PC-9 (cell line): ENCODE measurements at regions of chr9 and their contacts with region 1.

Region 1: DNA sequence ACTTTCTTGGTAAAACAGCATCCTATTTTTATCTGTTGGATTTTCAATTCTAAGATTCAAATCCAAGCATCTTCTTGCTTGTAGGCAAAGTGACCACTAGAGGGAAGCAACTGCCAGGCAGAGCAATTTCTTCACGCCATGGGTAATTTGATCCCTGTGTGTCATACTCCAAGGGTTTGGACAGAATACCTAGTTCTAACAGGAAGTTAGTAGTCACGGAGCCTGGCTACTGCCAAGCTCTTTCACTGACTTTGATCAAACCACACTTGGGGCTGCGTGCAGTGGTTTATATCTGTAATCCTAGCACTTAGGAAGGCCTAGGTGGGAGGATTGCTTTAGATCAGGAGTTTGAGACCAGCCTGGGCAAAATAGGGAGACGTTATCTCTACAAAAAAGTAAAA is 473.6 kb upstream of the TNC start:
- DNase-seq: peak; percentile 73 to 91
- H3K4me3 ChIP-seq: no peak overlapping the region
- H3K27ac ChIP-seq: peak overlapping the region; percentile 77
- H3K4me1 ChIP-seq: peaks cover 14% of the 10 kb centered on the region; the same call in 1 of the 2 replicates
- H3K27me3 ChIP-seq: no peaks in the 10 kb centered on the region
- CTCF ChIP-seq: peak; percentile 89

Region 2: DNA sequence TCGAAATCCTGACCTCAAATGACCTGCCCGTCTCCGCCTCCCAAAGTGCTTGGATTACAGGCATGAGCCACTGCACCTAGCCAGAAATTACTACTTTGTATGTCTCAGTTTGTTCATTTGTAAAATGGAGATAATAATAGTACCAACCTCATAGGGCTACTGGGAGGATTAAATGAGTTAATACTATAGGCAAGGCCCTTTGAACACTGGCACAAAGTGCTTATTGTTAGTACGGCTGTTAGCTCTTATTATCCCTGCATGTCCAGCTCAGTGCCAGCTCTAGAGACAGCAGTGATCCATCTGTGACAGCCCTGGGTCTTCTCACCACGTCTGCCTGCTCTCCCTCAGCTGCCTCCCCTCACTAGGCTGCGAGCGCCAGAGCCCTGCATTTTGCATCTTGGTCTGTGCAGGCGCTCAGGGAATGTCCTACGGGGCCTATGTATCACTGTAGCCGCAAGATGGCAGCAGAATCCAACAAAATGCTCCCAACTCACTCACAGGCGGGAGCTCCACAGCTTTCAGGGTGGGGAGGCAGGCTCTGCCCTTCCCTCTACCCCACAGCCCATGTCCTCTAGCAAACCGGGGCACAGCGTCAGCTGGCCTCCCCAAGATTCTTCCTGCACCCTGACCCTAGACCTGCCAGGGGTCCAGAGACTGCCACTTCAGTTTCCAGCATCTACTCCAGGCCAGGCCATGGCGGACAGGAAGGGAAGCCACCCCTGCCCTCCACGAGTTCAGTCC is 1186.1 kb before region 1 on chr9:
- CTCF ChIA-PET with region 1: no interaction called
- POLR2A ChIA-PET with region 1: no interaction called
- intact Hi-C with region 1: loop called (anchors 1 kb)
- DNase-seq: peak; percentile 59 to 76
- H3K4me3 ChIP-seq: no peak overlapping the region
- H3K27ac ChIP-seq: no peak overlapping the region
- H3K4me1 ChIP-seq: no peaks in the 10 kb centered on the region
- H3K27me3 ChIP-seq: no peaks in the 10 kb centered on the region
- CTCF ChIP-seq: peak; percentile 82

Region 3: GRCh38 chr9:114880291-114880751 is 711.3 kb before region 1 on chr9:
- CTCF ChIA-PET with region 1: no interaction called
- POLR2A ChIA-PET with region 1: no interaction called
- intact Hi-C with region 1: no loop called
- DNase-seq: no peak
- H3K4me3 ChIP-seq: no peak overlapping the region
- H3K27ac ChIP-seq: no peak overlapping the region
- H3K4me1 ChIP-seq: no peaks in the 10 kb centered on the region
- H3K27me3 ChIP-seq: peaks cover 4% of the 10 kb centered on the region; the same call in 1 of the 2 replicates
- CTCF ChIP-seq: no peak

Region 4: DNA sequence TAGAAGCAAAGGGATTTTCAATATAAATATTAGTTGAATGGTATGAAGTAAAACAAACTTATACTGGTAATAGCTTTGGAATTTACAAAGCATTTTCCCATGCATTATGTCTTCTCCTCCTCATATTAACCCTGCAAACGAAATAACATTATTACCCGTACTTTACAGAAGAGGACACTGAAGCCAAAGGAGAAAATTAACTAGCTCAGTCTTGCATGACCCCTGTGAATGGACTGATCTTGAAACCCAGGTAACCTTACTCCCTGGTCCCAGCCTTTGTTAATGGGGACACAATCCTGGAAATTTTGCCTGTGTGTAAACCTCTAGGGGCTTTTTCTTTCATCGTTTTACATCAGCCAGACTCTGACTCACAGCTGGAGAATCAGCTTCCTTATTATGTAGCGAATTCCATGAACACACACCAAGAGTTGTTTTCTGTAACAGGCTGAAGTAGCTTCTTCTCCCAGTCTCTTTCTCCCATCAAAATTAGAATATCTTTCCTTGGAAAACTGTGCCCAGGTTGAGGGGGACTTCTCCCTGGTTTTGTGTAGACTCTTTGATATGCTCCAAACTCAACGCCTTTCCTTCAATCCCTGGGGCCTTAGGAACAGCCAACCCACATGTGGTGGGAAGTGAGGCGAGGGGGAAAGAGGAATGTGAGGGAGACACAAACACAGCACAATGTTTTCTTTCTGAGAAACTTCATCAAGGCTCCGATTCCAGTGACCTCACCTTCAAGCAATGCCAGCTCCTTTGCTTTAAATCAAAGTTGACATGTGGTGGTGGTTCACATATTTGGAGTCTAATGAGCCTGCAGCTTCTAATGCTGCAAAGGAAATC is 81.1 kb after region 1 on chr9:
- CTCF ChIA-PET with region 1: interaction called, 6 read pairs
- POLR2A ChIA-PET with region 1: interaction called, 6 read pairs
- intact Hi-C with region 1: loop called (anchors 1 kb)
- DNase-seq: peak; percentile 69 to 87
- H3K4me3 ChIP-seq: no peak overlapping the region; the same call in 1 of the 2 replicates
- H3K27ac ChIP-seq: peak overlapping the region; percentile 100
- H3K4me1 ChIP-seq: peaks cover 46% of the 10 kb centered on the region
- H3K27me3 ChIP-seq: no peaks in the 10 kb centered on the region
- CTCF ChIP-seq: no peak

Region 5: GRCh38 chr9:115912086-115912485 is 320.5 kb after region 1 on chr9:
- CTCF ChIA-PET with region 1: interaction called, 12 read pairs
- POLR2A ChIA-PET with region 1: no interaction called
- intact Hi-C with region 1: no loop called
- DNase-seq: no peak
- H3K4me3 ChIP-seq: no peak overlapping the region
- H3K27ac ChIP-seq: no peak overlapping the region
- H3K4me1 ChIP-seq: no peaks in the 10 kb centered on the region
- H3K27me3 ChIP-seq: no peaks in the 10 kb centered on the region
- CTCF ChIP-seq: no peak

Region 6: GRCh38 chr9:116149844-116150243 is 558.3 kb after region 1 on chr9:
- CTCF ChIA-PET with region 1: interaction called, 15 read pairs
- POLR2A ChIA-PET with region 1: no interaction called
- intact Hi-C with region 1: loop called (anchors 2 kb)
- DNase-seq: no peak
- H3K4me3 ChIP-seq: no peak overlapping the region
- H3K27ac ChIP-seq: no peak overlapping the region
- H3K4me1 ChIP-seq: peaks cover 11% of the 10 kb centered on the region
- H3K27me3 ChIP-seq: no peaks in the 10 kb centered on the region
- CTCF ChIP-seq: peak; percentile 72

Region 7: GRCh38 chr9:116494815-116495634 is 903.4 kb after region 1 on chr9:
- CTCF ChIA-PET with region 1: no interaction called
- POLR2A ChIA-PET with region 1: no interaction called
- intact Hi-C with region 1: loop called (anchors 2 kb)
- DNase-seq: peak in 1 of 2 experiments; percentile 16
- H3K4me3 ChIP-seq: no peak overlapping the region
- H3K27ac ChIP-seq: no peak overlapping the region
- H3K4me1 ChIP-seq: no peaks in the 10 kb centered on the region
- H3K27me3 ChIP-seq: no peaks in the 10 kb centered on the region
- CTCF ChIP-seq: peak; percentile 79

Region 8: DNA sequence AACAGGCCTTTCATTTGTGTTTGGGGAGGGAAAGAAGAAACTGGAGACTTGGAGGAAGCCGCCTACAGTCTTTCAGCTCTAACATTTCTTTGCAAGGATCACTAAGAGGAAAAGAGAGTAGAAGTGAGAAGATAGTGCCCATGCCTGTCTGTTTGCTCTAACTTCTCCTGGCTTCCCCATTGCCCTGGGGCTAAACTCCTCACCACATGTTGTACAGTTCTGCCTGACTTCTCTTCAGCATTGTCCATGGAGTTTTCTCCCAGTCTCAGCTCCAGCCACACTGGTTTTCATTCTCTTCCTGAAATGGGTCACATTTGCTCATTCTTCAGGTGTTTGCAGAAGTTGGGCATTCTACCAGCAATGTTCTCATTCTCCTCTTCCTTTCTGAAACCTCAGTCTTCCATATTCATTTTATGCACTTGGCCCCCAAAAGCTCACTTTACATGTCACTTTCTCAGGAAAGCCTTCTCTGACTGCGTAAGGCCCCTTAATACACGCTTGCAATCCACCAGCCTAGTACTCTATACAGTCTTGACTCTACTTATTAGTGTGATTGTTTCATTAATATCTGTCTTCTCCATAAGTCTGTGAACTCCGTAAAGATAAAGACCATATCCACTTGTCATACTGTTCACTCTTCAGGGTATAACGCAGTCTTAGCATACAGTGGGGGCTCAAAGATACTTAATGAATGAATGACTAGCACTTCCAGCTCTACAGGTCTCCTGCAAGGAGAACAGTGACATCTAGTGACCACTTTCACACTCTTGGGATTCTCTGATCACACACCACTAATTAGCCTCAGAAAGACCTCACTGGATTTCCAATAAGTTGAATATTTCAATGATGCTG is 1055.3 kb after region 1 on chr9:
- CTCF ChIA-PET with region 1: interaction called, 7 read pairs
- POLR2A ChIA-PET with region 1: interaction called, 3 read pairs
- intact Hi-C with region 1: loop called (anchors 1 kb)
- DNase-seq: peak in 1 of 2 experiments; percentile 7
- H3K4me3 ChIP-seq: no peak overlapping the region
- H3K27ac ChIP-seq: no peak overlapping the region
- H3K4me1 ChIP-seq: no peaks in the 10 kb centered on the region
- H3K27me3 ChIP-seq: no peaks in the 10 kb centered on the region
- CTCF ChIP-seq: peak; percentile 72